Activated CD4-positive, alpha-beta memory T cell treated with anti-CD3 and anti-CD28 coated beads, Interleukin-2, amount 10 ng/mL, durations not matched to agents 7 days and 5 days (primary cell): ENCODE measurements at regions of chr1 and their contacts with region 1.

Region 1: GRCh38 chr1:19704247-19705113 is 39.8 kb downstream of the HTR6 start:
- DNase-seq: peak; percentile 50
- H3K4me3 Mint-ChIP-seq: no peak overlapping the region
- H3K27ac Mint-ChIP-seq: no peak overlapping the region
- H3K4me1 Mint-ChIP-seq: peaks cover 4% of the 10 kb centered on the region
- H3K27me3 Mint-ChIP-seq: no peaks in the 10 kb centered on the region

Region 2: GRCh38 chr1:19694298-19694697 is 10.2 kb before region 1 on chr1:
- CTCF ChIA-PET with region 1: interaction called, 10 read pairs
- POLR2A ChIA-PET with region 1: no interaction called
- DNase-seq: no peak
- H3K4me3 Mint-ChIP-seq: no peak overlapping the region
- H3K27ac Mint-ChIP-seq: no peak overlapping the region
- H3K4me1 Mint-ChIP-seq: peaks cover 3% of the 10 kb centered on the region
- H3K27me3 Mint-ChIP-seq: no peaks in the 10 kb centered on the region

Region 3: GRCh38 chr1:19715334-19716203 is 11.1 kb after region 1 on chr1:
- CTCF ChIA-PET with region 1: interaction called, 27 read pairs
- POLR2A ChIA-PET with region 1: no interaction called
- DNase-seq: peak; percentile 87
- H3K4me3 Mint-ChIP-seq: no peak overlapping the region
- H3K27ac Mint-ChIP-seq: no peak overlapping the region
- H3K4me1 Mint-ChIP-seq: peaks cover 18% of the 10 kb centered on the region
- H3K27me3 Mint-ChIP-seq: no peaks in the 10 kb centered on the region

Region 4: DNA sequence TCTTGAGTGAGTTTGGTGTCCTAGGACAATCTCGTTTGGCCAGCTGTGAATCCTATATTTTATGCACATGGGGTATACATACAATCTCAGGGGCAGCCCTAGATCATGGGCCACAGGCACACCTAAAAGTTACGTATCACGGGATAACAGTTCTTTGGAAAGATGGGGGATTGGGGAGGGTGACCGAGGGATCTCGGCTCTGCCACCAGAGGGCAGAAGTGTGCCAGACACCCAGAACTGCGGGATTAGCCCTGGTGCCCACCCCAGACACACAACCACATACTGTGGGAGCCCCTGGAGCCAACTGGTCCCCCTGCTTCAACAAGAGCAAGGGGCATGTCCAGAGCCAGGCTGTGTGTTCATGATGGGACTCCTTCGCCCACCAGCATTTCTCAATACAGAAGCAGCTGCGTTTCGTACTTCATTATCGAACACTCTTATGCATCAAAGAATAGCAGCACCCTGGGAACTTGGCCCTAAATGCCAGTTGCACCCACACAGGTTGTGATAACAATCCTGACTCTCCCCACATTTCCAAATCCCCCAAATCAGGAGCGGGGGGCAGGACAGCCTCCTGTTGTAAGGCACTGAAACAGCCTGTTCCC is 57.8 kb after region 1 on chr1:
- CTCF ChIA-PET with region 1: no interaction called
- POLR2A ChIA-PET with region 1: no interaction called
- DNase-seq: peak; percentile 26
- H3K4me3 Mint-ChIP-seq: no peak overlapping the region
- H3K27ac Mint-ChIP-seq: no peak overlapping the region
- H3K4me1 Mint-ChIP-seq: peaks cover 18% of the 10 kb centered on the region
- H3K27me3 Mint-ChIP-seq: no peaks in the 10 kb centered on the region